PC-9 (cell line): ENCODE measurements at regions of chr2 and their contacts with region 1.

Region 1: GRCh38 chr2:164538240-164538866 is 82.9 kb downstream of the GRB14 start:
- DNase-seq: peak in 1 of 2 experiments; percentile 41
- H3K4me3 ChIP-seq: no peak overlapping the region
- H3K27ac ChIP-seq: no peak overlapping the region
- H3K4me1 ChIP-seq: peaks cover 21% of the 10 kb centered on the region
- H3K27me3 ChIP-seq: no peaks in the 10 kb centered on the region
- CTCF ChIP-seq: peak; percentile 68

Region 2: DNA sequence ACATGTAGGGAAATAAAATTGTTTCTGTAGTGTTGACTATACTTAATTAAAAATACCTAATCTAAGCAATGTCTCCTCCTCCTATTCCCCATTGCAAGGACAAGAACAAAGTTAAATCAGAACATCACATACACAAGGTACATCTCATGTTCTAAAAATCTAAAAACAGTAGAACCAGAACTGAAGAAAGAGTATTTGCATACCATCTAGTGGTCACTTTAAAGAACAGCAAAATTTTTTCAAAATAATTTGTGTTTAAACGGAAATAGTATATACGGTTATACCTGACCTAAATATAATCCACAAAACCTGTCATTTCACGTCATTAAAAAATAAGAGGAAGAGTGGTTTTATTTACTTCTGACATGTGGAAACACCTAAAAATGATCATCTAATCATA is 1405.5 kb before region 1 on chr2:
- CTCF ChIA-PET with region 1: no interaction called
- POLR2A ChIA-PET with region 1: interaction called, 10 read pairs
- intact Hi-C with region 1: no loop called
- DNase-seq: no peak
- H3K4me3 ChIP-seq: no peak overlapping the region
- H3K27ac ChIP-seq: no peak overlapping the region
- H3K4me1 ChIP-seq: no peaks in the 10 kb centered on the region
- H3K27me3 ChIP-seq: no peaks in the 10 kb centered on the region
- CTCF ChIP-seq: peak; percentile 70

Region 3: GRCh38 chr2:163191372-163191771 is 1347.0 kb before region 1 on chr2:
- CTCF ChIA-PET with region 1: no interaction called
- POLR2A ChIA-PET with region 1: no interaction called
- intact Hi-C with region 1: loop called (anchors 5 kb)
- DNase-seq: peak in 1 of 2 experiments; percentile 4
- H3K4me3 ChIP-seq: no peak overlapping the region
- H3K27ac ChIP-seq: no peak overlapping the region
- H3K4me1 ChIP-seq: no peaks in the 10 kb centered on the region
- H3K27me3 ChIP-seq: no peaks in the 10 kb centered on the region
- CTCF ChIP-seq: peak; percentile 68

Region 4: DNA sequence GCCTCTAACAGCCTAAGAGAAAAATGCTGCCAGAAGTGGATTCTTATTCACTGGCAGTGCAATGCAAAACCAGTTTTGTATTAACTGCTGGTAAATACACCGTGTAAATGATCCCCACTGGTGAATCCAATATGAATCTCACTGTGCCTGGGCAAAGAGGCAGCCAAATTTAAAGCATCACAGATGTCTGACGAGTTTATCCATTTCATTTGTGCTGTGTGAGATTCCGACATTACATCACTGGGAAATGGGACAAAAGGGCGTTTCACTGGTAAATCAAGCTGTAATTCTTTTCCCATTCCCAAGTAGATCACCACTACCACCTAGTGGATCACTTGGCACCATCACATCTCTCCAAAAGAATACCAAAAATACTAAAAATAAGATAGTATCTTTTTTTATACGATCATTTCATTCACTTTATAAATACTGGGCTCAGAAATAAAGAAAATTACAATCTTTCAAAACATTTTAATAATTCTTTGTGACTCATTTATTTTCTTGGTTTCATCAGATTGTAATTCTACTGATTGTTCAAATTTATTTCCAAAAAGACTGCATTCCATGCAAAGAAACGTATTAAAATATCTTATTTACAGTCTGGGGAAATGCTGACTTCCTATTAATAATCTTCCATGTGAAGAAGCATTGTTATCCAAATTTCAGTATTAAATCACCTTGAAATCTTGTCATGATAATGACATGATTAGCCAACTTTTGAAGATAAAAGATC is 42.7 kb before region 1 on chr2:
- CTCF ChIA-PET with region 1: no interaction called
- POLR2A ChIA-PET with region 1: no interaction called
- intact Hi-C with region 1: loop called (anchors 2 kb)
- DNase-seq: peak; percentile 10 to 40
- H3K4me3 ChIP-seq: no peak overlapping the region
- H3K27ac ChIP-seq: no peak overlapping the region
- H3K4me1 ChIP-seq: no peaks in the 10 kb centered on the region
- H3K27me3 ChIP-seq: no peaks in the 10 kb centered on the region
- CTCF ChIP-seq: peak; percentile 67